ENCODE measurements at regions of chr11 and their contacts with region 1.

Region 1: DNA sequence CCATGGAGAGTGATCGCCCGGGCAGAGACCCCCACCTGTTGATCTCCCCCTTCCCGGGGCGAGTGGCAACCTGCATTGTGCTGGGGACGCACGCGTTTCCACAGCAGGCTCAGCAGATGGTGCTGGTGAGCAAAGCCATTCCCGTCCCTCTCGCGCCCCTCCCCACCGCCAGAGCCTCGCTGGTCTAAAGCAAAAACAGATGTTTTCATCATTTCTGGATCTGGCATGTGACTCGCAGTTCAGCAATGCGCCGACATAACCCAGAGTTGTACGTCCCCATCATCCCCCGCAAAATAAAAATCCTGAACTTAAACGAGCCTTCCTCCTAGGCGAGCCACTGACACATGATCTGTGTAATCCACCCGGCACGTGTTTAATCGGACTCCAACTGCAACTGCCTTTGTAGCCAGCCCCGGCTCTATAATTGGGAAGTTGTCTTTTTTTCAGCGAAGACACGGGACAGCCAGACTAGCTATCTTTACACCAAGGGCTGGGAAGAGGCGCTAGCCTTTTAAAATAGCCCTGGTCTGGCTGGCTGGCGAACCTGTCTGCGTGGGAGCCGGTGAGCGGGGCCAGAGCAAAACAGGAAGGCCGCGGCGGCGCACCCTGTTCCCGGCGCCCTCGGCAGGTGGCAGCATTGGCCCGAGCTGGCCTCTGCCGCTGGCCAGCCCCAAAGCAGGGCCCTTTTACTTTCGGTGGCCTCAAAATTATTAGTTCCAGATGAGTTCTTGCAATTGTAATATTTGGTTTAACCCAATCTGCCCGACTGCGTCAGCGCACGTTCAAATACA is 203.0 kb upstream of the SORL1-AS1 start:
- ATAC-seq: peak; percentile 83 to 93 (median 90)
- H3K4me3 ChIP-seq: peak overlapping the region; percentile 26 to 40 (median 30)
- H3K27ac ChIP-seq: peak overlapping the region; percentile 80 to 87
- H3K4me1 ChIP-seq: peaks cover 31 to 42% of the 10 kb centered on the region in 2 donors

Region 2: GRCh38 chr11:122085264-122085663 is 429.5 kb after region 1 on chr11:
- in situ Hi-C with region 1: loop called in 3 of 9 experiments (anchors 10 to 25 kb)
- ATAC-seq: peak; percentile 64 to 98 (median 87)
- H3K4me3 ChIP-seq: no peak overlapping the region
- H3K27ac ChIP-seq: no peak overlapping the region
- H3K4me1 ChIP-seq: peaks cover 0 to 11% of the 10 kb centered on the region in 2 donors

Region 3: GRCh38 chr11:122108192-122108799 is 452.6 kb after region 1 on chr11:
- in situ Hi-C with region 1: loop called in 1 of 9 experiments (anchors 25 kb)
- ATAC-seq: peak in 2 of 8 experiments; percentile 10 to 50
- H3K4me3 ChIP-seq: no peak overlapping the region
- H3K27ac ChIP-seq: no peak overlapping the region
- H3K4me1 ChIP-seq: peaks cover 6 to 20% of the 10 kb centered on the region in 2 donors

Region 4: DNA sequence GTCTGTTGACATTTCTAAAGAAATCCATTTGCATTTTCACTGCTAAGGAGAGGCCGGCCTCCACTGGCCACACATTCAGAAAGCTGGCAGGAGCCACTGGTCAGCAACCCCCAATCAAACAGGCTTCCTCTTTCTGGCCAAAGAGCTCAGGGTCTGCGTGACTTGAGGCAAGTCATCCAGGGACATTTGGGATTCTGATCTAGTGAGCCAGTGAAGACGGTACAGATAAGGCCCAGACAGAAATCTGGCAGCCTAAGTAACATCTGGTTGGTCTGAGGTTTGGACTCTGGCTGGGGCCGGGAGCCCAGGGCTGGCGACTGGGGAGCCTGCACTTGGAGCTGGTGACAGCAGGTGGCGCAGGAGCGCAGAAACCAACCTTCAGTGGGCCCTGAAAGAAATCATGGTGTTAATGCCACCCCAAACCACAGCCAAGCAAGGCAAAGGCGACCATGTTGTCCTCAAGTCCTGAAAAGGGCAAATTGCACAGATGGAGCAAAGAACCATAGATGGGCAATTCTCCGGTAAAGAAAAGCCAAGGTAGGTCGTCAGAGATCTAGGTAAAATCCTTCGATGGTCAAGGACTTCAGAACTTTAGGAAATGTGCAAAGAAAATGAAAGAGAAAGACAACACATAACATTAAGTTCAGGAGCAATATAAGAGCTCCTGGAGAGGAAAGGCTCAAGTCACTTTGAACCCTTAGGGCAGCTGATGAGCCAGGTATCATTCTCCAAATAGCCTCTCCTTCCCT is 559.7 kb after region 1 on chr11:
- in situ Hi-C with region 1: loop called in 4 of 9 experiments (anchors 25 kb)
- ATAC-seq: peak; percentile 90 to 95 (median 92)
- H3K4me3 ChIP-seq: no peak overlapping the region
- H3K27ac ChIP-seq: no peak overlapping the region
- H3K4me1 ChIP-seq: peaks cover 5 to 12% of the 10 kb centered on the region in 2 donors